ENCODE measurements at regions of chr4 and their contacts with region 1.

Region 1: DNA sequence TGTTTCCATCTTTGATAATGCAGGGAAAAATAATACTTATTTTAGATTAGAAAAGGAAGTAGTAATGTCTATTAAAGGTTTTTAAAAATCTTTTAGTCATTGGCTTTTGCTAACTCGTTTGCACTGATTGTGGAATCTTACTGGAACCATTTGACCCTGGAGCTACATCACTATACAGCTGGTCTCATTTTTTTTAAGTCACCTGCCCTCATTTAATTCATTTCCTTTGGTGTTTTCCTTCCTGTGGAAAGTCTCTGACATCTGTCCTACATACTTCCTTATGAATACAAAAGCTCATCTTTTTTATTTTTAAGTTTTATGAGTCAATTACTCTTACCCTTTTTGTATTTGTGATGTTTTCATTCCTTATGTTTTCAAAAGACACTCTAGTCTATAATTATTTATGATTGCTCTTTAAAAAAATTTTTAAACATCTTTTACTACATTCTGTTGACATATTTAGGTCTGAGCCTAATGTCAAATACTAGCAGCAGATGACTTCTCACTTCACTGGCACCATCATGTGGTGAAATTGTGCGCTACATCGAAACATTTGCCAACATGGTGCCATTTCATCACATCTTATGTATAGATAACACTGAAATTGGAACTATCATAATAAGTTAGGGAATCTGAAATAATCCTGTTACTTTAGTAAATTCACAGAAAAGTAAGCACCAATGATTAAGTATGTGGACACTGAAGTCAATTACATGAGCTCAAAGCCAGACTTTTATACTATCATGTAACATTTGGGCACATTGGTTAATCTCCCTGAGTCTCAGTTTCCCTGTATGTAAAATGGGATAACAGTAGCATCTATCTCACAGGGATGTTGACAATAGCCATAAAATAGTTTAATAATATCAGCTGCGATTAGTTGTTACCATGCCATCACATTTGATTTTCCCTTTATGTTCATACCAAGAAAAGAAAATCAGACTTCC is 9.4 kb upstream of the MMAA start:
- DNase-seq: peak; percentile 80
- H3K4me3 Mint-ChIP-seq: no peak overlapping the region
- H3K27ac Mint-ChIP-seq: no peak overlapping the region
- H3K4me1 Mint-ChIP-seq: peaks cover 11% of the 10 kb centered on the region
- H3K27me3 Mint-ChIP-seq: peaks cover 4% of the 10 kb centered on the region

Region 2: DNA sequence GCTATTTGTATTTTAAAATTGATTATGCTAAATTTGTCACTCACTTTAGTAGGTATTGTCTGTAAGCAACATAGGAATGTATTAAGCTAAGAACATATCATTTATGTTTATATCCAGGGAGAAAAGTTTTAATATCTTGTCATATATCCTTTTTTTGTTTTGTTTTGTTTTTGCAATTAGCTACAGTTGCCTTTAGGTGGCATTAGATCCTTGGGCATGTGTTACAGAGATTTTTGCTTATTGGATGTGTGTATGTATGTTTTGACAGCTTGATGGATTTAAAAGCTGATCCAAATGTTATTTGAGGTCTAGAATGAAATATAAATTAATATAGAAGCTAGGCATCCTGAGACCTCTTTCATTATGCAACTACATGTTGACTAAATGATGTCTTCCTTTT is 393.2 kb before region 1 on chr4:
- CTCF ChIA-PET with region 1: interaction called, 12 read pairs
- POLR2A ChIA-PET with region 1: no interaction called
- intact Hi-C with region 1: no loop called
- DNase-seq: no peak
- H3K4me3 Mint-ChIP-seq: no peak overlapping the region
- H3K27ac Mint-ChIP-seq: no peak overlapping the region
- H3K4me1 Mint-ChIP-seq: no peaks in the 10 kb centered on the region
- H3K27me3 Mint-ChIP-seq: peaks cover 3% of the 10 kb centered on the region

Region 3: GRCh38 chr4:145234091-145234706 is 375.6 kb before region 1 on chr4:
- CTCF ChIA-PET with region 1: interaction called, 18 read pairs
- POLR2A ChIA-PET with region 1: no interaction called
- intact Hi-C with region 1: loop called (anchors 1 kb)
- DNase-seq: peak; percentile 65
- H3K4me3 Mint-ChIP-seq: no peak overlapping the region
- H3K27ac Mint-ChIP-seq: no peak overlapping the region
- H3K4me1 Mint-ChIP-seq: no peaks in the 10 kb centered on the region
- H3K27me3 Mint-ChIP-seq: no peaks in the 10 kb centered on the region

Region 4: DNA sequence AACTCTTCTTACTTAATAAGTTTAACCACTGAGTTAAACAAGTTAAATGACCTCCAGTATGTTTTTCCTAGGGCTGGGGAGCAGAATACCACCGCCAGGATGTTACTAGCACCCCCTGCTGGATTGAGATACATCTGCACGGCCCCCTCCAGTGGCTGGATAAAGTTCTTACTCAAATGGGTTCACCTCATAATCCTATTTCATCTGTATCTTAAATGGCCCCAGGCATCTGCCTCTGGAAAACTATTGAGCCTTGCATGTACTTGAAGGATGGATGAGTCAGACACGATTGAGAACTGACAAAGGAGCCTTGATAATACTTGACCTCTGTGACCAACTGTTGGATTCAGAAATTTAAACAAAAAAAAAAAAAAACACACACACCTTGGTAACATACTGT is 52.0 kb before region 1 on chr4:
- CTCF ChIA-PET with region 1: interaction called, 4 read pairs
- POLR2A ChIA-PET with region 1: no interaction called
- intact Hi-C with region 1: loop called (anchors 5 kb)
- DNase-seq: peak; percentile 70
- H3K4me3 Mint-ChIP-seq: no peak overlapping the region
- H3K27ac Mint-ChIP-seq: no peak overlapping the region
- H3K4me1 Mint-ChIP-seq: peaks cover under 1% of the 10 kb centered on the region
- H3K27me3 Mint-ChIP-seq: peaks cover 8% of the 10 kb centered on the region

Measured in activated CD4-positive, alpha-beta memory T cell treated with anti-CD3 and anti-CD28 coated beads for 36 hours (primary cell).